Activated naive CD4-positive, alpha-beta T cell treated with anti-CD3 and anti-CD28 coated beads for 36 hours (primary cell): ENCODE measurements at regions of chr5 and their contacts with region 1.

Region 1: GRCh38 chr5:141960449-141961202 is 2.6 kb upstream of the PCDH12 start:
- DNase-seq: peak; percentile 97
- H3K4me3 Mint-ChIP-seq: peak overlapping the region; percentile 33
- H3K27ac Mint-ChIP-seq: peak overlapping the region; percentile 74
- H3K4me1 Mint-ChIP-seq: peaks cover 38% of the 10 kb centered on the region
- H3K27me3 Mint-ChIP-seq: no peaks in the 10 kb centered on the region

Region 2: DNA sequence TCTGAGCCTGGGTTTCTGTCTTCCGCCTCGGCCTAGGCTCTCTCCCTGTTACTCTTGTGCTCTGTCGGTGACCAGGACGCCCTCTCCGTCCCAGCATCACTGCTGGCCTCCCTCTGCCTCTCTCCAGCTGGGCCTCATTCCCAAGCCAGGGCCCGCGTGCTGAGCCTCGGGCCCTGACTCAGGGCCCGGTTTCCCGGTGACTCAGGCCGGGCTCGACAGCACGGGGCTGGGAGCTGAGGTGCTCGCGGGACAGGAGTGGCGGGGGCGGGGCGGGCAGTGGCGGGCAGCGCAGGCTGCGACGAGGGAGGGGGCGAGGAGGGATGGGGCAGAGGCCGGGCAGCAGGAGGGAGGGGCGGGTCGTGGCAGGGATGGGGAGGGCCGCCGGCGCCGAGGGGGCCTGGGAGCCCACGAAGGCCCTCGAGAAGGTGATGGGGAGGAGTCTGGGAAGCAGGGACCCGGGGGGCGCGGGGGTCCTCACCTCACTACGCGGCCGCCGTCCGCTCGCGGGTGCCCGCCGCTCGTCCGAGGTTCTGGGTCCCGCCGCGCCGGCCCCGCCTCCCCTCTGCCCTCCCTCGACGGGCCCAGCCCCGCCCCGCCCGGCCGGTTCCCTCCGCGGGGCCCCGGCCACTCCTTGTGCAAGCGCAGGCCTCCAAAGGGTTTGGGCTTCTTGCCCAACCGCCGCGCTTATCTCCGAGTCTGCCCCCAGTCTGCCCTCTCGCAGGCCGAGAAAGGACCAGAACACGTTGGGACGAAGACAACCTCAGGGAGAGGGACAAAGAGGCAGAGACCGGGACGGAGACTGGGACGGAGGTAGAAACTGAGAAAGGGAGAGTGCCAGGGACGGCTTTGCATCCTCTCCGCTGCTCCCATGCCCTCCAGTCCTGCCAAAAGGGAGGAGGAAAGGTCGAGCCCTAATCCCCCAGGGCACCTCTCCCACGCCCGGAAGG is 278.7 kb before region 1 on chr5 and contains the start of gene ARAP3:
- CTCF ChIA-PET with region 1: interaction called, 19 read pairs
- intact Hi-C with region 1: no loop called
- DNase-seq: peak; percentile 41
- H3K4me3 Mint-ChIP-seq: peak within 1 kb of the TSS; percentile 63
- H3K27ac Mint-ChIP-seq: peak within 1 kb of the TSS; percentile 25
- H3K4me1 Mint-ChIP-seq: peaks cover 18% of the 10 kb centered on the region
- H3K27me3 Mint-ChIP-seq: no peaks in the 10 kb centered on the region
- total RNA-seq, gene ARAP3: 1.2 to 2.2 TPM

Region 3: DNA sequence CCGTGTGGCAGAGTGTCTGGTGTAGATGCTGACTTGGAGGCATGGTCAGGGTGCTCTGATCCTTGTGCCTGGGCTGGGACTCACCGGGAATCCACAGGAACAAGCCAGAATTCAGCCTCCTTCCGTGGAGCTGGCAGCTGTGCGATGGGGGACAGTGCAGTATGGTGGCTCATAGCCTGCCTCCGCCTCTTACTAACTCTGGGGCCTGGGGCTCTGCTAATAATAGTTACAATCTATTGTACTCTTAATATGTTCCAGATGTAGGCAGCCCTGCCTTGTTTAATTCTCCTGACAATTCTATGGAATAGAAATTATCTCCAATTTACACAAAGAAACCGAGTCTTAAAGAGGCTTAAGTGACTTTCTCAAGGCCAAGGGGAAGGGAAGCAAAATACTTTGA is 160.0 kb before region 1 on chr5:
- CTCF ChIA-PET with region 1: no interaction called
- intact Hi-C with region 1: no loop called
- DNase-seq: no peak
- H3K4me3 Mint-ChIP-seq: no peak overlapping the region
- H3K27ac Mint-ChIP-seq: no peak overlapping the region
- H3K4me1 Mint-ChIP-seq: no peaks in the 10 kb centered on the region
- H3K27me3 Mint-ChIP-seq: peaks cover 18% of the 10 kb centered on the region

Region 4: DNA sequence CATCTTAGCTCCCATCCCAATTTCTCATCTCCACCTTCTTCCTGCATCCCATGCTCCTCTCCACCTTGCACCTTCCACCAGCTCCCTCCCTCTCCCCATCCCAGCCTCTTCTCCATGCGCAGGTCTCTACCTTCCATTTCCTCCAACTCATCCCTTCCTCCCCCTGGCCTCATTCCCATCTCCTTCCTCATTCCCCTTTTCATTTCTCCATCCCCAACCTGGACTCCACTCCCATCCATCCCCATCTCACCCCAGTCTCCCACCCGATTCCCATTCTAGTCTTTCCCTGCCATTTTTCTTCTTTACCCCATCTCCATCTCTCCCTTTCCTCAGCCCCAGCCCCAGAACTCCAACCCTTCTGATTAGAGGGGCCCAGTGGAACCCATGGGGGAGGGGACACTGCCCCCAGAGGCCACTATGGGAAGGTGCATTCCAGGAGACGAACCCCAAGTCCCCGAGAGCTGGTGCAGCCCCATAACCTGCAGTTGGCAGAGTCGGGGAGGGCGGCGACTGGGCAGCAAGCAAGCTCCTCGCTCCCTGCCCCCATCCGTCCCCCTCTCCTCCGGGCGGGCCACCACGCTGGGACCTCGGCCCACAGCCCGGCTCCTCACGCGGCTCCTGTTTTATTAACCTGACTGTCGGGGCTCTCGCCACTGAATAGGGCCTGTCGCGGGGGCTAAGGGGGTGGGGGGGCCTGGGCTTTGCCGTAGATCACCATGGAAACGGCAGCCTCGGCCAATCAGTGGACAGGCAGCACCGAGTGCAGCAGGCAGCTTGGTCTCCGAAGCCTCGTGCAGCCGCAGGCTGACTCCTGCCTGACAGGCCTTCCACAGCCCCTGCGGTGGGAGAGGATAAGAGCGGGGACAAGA is 149.1 kb before region 1 on chr5:
- CTCF ChIA-PET with region 1: interaction called, 8 read pairs
- intact Hi-C with region 1: loop called (anchors 1 kb)
- DNase-seq: peak; percentile 25
- H3K4me3 Mint-ChIP-seq: no peak overlapping the region
- H3K27ac Mint-ChIP-seq: no peak overlapping the region
- H3K4me1 Mint-ChIP-seq: no peaks in the 10 kb centered on the region
- H3K27me3 Mint-ChIP-seq: peaks cover 44% of the 10 kb centered on the region

Region 5: DNA sequence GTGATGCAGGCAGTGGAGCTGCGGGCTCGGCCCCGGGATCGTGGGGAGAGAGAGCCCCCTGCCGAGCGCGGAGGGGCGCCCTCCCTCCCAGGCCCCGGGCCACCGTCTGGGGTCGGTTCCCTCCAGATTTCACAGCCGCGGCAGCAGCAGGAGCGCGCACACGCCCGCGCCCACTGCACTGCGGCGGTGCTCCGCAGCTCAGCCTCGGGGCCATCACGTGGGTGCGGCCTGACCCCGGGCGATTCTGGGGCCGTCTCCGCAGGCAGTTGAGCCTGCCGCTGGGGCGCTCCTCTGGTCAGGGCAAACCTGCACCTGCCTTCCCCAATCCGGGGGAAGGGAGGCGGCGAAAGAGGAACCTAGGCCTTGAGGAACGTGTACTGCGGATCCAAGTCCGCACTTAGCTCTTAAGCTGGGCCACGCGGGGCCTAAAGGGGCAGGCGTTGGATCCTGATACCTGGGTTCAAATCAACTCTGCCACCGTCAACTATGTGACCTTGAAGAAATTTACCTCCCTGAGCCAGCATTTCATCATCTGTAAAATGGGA is 46.4 kb before region 1 on chr5:
- CTCF ChIA-PET with region 1: interaction called, 58 read pairs
- intact Hi-C with region 1: no loop called
- DNase-seq: peak; percentile 25
- H3K4me3 Mint-ChIP-seq: peak overlapping the region; percentile 35
- H3K27ac Mint-ChIP-seq: no peak overlapping the region
- H3K4me1 Mint-ChIP-seq: peaks cover 5% of the 10 kb centered on the region
- H3K27me3 Mint-ChIP-seq: peaks cover 22% of the 10 kb centered on the region

Region 6: GRCh38 chr5:141976176-141976575 is 15.6 kb after region 1 on chr5:
- CTCF ChIA-PET with region 1: interaction called, 115 read pairs
- intact Hi-C with region 1: no loop called
- DNase-seq: no peak
- H3K4me3 Mint-ChIP-seq: no peak overlapping the region
- H3K27ac Mint-ChIP-seq: no peak overlapping the region
- H3K4me1 Mint-ChIP-seq: peaks cover 33% of the 10 kb centered on the region
- H3K27me3 Mint-ChIP-seq: no peaks in the 10 kb centered on the region